ENCODE measurements at regions of chr10 and their contacts with region 1.

Region 1: GRCh38 chr10:16777473-16778370 is 39.5 kb downstream of the RSU1 start:
- DNase-seq: no peak
- H3K4me3 ChIP-seq: no peak overlapping the region
- H3K27ac ChIP-seq: no peak overlapping the region
- H3K4me1 ChIP-seq: no peaks in the 10 kb centered on the region
- H3K27me3 ChIP-seq: no peaks in the 10 kb centered on the region
- CTCF ChIP-seq: peak; percentile 21 to 75 (median 60)
- EP300 ChIP-seq: no peak
- POLR2A ChIP-seq: no peak

Region 2: GRCh38 chr10:15901889-15902288 is 875.8 kb before region 1 on chr10:
- intact Hi-C with region 1: loop called (anchors 2 kb)
- DNase-seq: no peak
- H3K4me3 ChIP-seq: no peak overlapping the region
- H3K27ac ChIP-seq: no peak overlapping the region
- H3K4me1 ChIP-seq: no peaks in the 10 kb centered on the region
- H3K27me3 ChIP-seq: no peaks in the 10 kb centered on the region
- CTCF ChIP-seq: no peak
- EP300 ChIP-seq: no peak
- POLR2A ChIP-seq: no peak

Measured in sigmoid colon (tissue), 7 donors.